HAP-1 (cell line): ENCODE measurements at regions of chr17 and their contacts with region 1.

Region 1: DNA sequence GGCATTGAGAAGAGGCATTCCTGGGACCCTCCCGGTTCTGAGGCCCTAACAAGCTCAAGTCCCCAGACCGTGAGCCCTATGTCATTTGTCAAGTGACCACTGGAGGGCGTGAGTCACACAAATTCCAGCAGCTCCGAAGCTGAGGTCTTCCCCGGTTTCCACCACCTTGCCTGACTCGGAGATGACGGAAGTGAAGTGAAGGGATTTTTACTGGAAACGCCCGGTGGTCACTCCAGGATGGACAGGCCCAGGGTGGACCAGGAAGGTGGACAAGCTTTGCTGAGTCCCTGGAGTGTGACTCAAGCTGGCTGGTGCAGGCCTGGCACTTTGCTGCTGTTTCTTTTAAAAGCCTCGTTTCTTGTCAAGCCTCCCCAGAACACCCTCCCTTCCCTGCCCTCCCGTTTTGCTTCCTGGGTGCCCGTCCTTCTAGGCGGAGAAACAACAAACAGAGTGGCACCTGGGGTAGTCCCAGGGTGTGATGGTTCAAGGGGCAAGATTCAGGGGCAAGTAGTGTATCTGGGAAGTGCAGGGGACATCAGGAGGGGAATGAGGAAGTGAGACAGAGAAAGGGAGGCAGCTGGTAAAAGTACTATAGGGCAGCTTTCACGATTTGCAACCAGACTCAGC is 5.3 kb upstream of the NOS2 start:
- DNase-seq: peak; percentile 70 to 89
- H3K4me3 ChIP-seq: 0 out of 2 replicates have a peak overlapping the region, but pooled peaks have one; percentile 5
- H3K4me1 ChIP-seq: peaks cover 2% of the 10 kb centered on the region; the same call in 1 of the 2 replicates
- H3K27me3 ChIP-seq: no peaks in the 10 kb centered on the region

Region 2: DNA sequence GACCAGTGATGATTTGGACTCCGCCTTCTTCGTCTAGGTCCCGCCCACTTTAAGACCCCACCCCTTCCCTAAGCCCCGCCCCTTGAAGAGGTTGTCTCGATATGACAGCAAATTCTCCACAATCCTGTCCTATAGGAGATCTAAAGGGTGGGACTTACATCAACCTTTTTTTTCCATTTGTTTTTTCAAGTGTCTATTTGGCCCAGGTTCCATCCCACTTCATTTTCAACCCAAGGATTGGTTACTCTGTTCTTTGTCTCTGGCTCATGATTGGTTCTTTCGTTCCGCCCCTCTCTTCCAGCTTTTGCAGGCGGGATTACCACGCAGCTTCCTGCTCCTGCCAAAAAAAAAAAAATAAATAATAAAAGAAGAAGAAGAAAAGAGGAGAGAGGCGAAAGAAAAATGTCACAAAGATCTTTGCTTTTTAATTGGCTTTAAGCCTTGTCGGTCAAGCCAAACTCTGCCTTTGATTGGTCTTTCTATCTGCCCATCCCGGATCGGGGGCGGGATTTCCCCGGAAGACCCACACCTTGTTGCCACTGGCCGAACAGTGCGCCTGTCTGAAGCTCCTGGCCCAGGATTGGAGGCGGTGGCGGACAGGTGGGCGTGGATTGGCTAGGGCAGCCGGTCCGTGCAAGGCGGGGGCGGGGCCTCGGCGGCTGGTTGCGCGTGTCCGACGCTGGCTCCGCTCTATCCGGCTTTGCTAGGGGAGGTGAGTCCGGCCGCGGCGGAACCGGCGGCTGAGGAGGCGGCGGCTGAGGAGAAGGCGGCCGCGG is 235.6 kb after region 1 on chr17:
- in situ Hi-C with region 1: loop called (anchors 25 kb)
- DNase-seq: peak; percentile 99 to 100
- H3K4me3 ChIP-seq: peak overlapping the region; percentile 77
- H3K4me1 ChIP-seq: peaks cover 26% of the 10 kb centered on the region
- H3K27me3 ChIP-seq: no peaks in the 10 kb centered on the region; the same call in 1 of the 2 replicates

Region 3: GRCh38 chr17:28065706-28066105 is 260.1 kb after region 1 on chr17:
- in situ Hi-C with region 1: no loop called
- DNase-seq: no peak
- H3K4me3 ChIP-seq: no peak overlapping the region
- H3K4me1 ChIP-seq: peaks cover 5% of the 10 kb centered on the region
- H3K27me3 ChIP-seq: no peaks in the 10 kb centered on the region